BJ (cell line): ENCODE measurements at regions of chr2 and their contacts with region 1.

Region 1: DNA sequence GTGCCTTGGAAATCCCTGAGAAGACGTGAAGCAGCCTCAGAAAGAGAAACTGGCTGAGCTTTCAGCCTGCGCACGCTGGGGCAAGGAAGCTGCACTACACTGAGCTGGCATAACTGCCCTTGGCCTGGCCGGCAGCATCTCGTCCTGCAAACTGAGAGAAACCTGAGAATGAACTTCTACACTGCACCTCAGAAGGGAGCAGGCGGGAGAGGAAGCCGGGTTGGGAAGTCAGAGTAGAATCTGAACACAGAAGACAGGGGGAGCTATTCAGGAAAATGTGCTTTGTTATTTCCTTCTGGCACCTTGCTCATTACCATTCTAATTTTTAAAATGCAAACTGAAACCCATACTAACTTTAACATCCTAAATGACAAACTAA is 70.9 kb downstream of the ZEB2 start:
- DNase-seq: no peak
- H3K4me3 ChIP-seq: no peak overlapping the region
- H3K27me3 ChIP-seq: no peaks in the 10 kb centered on the region
- CTCF ChIP-seq: peak; percentile 39

Region 2: GRCh38 chr2:144424559-144425240 is 24.3 kb before region 1 on chr2:
- CTCF ChIA-PET with region 1: no interaction called
- POLR2A ChIA-PET with region 1: no interaction called
- DNase-seq: no peak
- H3K4me3 ChIP-seq: no peak overlapping the region
- H3K27me3 ChIP-seq: no peaks in the 10 kb centered on the region
- CTCF ChIP-seq: no peak

Region 3: GRCh38 chr2:144438801-144439631 is 10.0 kb before region 1 on chr2:
- CTCF ChIA-PET with region 1: interaction called, 12 read pairs
- POLR2A ChIA-PET with region 1: no interaction called
- DNase-seq: no peak
- H3K4me3 ChIP-seq: no peak overlapping the region
- H3K27me3 ChIP-seq: no peaks in the 10 kb centered on the region
- CTCF ChIP-seq: no peak

Region 4: GRCh38 chr2:144471305-144472045 is 22.5 kb after region 1 on chr2:
- CTCF ChIA-PET with region 1: no interaction called
- POLR2A ChIA-PET with region 1: no interaction called
- DNase-seq: no peak
- H3K4me3 ChIP-seq: no peak overlapping the region
- H3K27me3 ChIP-seq: no peaks in the 10 kb centered on the region
- CTCF ChIP-seq: no peak